ENCODE measurements at regions of chr1 and their contacts with region 1.

Region 1: DNA sequence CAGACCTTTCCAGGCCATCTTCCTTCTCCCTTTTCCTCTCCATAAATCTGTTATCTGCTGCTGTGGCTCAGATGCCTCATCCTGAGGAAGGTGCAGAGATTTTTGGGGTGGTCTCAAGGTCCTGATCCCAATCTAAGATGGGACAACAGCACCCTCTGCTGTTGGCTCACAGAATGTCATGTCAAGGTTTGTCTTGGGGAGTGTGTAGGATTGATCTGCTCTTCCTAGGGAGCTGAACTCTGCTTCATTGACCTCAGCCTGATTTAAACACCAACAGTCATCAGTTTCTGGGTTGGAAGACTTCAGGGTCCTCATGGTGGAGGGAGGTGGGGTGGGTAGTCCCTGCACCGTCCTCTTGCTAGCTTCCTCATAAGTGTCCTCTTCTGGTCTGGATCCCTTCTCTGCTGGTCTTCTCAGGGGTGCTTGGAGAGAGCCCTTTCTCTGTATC is 62.8 kb upstream of the LAX1 start:
- DNase-seq: peak; percentile 81 to 86 (median 84)
- ATAC-seq: peak; percentile 95
- H3K4me3 ChIP-seq: no peak overlapping the region
- H3K27ac ChIP-seq: no peak overlapping the region
- H3K4me1 ChIP-seq: peaks cover 0 to 5% of the 10 kb centered on the region in 2 experiments; a peak in 2 of 5 replicates
- H3K27me3 ChIP-seq: no peaks in the 10 kb centered on the region
- CTCF ChIP-seq: peak; percentile 90 to 97 (median 91)
- EP300 ChIP-seq: no peak; the same call in 1 of the 2 replicates
- POLR2A ChIP-seq: no peak
- RAD21 ChIP-seq: peak; percentile 99 to 100

Region 2: GRCh38 chr1:203273206-203273868 is 428.8 kb before region 1 on chr1:
- CTCF ChIA-PET with region 1: interaction called, 4 read pairs
- POLR2A ChIA-PET with region 1: no interaction called
- in situ Hi-C with region 1: loop called (anchors 5 kb)
- intact Hi-C with region 1: no loop called
- DNase-seq: peak; percentile 81 to 93 (median 87)
- ATAC-seq: peak; percentile 90
- H3K4me3 ChIP-seq: no peak overlapping the region
- H3K27ac ChIP-seq: no peak overlapping the region
- H3K4me1 ChIP-seq: peaks cover 17 to 18% of the 10 kb centered on the region in 2 experiments; a peak in 4 of 5 replicates
- H3K27me3 ChIP-seq: peaks cover 0 to 18% of the 10 kb centered on the region in 2 experiments; a peak in 1 of 5 replicates
- CTCF ChIP-seq: peak; percentile 96 to 100 (median 98)
- EP300 ChIP-seq: peak; percentile 14; the same call in 1 of the 2 replicates
- POLR2A ChIP-seq: no peak
- RAD21 ChIP-seq: peak; percentile 100

Region 3: DNA sequence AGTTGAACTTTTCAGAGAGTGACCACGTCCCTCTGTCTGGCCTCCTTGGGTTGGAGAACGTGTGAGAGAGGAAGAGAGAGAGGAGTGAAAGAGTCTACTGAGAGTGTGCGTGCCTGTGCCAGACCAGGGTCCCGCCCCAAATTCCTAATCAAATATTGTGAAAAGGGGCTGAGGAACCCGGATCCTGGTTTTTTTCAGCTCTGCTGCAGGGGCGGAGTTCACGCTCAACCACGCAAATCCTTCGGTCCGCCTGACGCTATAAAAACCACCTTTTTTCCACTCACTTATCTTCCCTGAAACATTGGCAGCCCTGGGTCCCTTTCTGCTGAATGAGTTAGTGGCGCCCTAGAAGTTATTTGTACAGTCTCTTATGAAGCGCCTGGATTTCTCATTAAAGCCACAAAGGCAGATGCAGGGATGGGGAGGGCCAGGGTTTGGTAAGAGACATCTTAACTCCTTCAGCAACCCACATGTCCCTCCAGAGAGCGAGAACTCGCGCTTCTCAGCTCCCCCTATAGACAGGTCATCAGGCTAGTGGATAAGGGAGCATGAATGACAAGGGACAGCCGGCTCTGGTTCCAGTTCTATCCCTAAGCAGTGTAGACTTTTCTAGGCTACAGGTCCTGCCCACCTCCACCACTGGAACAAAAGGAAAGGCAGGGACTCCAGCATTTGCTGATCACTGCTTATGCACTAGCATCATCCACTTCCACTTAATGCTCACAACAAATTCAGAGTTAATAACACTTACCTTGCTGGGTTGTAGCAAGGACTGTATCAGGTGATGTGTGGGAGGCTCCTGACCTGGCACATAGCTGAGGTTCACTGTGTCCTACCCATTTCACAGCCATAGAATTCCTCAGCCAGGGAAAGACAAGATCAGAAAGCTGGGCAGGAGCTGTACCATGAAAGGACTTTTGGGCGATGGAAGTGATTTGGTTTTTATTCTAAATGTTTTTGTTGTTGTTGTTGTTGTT is 350.8 kb before region 1 on chr1 and contains the start of gene FMOD:
- CTCF ChIA-PET with region 1: no interaction called
- POLR2A ChIA-PET with region 1: no interaction called
- in situ Hi-C with region 1: loop called (anchors 5 kb)
- intact Hi-C with region 1: no loop called
- DNase-seq: peak; percentile 38 to 50 (median 43)
- ATAC-seq: peak; percentile 86
- H3K4me3 ChIP-seq: no peak within 1 kb of the TSS
- H3K27ac ChIP-seq: no peak within 1 kb of the TSS
- H3K4me1 ChIP-seq: no peaks in the 10 kb centered on the region
- H3K27me3 ChIP-seq: peaks cover 47 to 69% of the 10 kb centered on the region in 2 experiments
- CTCF ChIP-seq: peak; percentile 5 to 45 (median 32); a peak in 4 of 6 replicates
- EP300 ChIP-seq: no peak
- POLR2A ChIP-seq: no peak
- RAD21 ChIP-seq: no peak
- polyA plus RNA-seq, gene FMOD: 0.03 TPM in 1 of 2 experiments, not detected in the other

Region 4: GRCh38 chr1:203593723-203594122 is 108.4 kb before region 1 on chr1:
- CTCF ChIA-PET with region 1: interaction called, 10 read pairs
- POLR2A ChIA-PET with region 1: interaction called, 5 read pairs
- in situ Hi-C with region 1: no loop called
- intact Hi-C with region 1: no loop called
- DNase-seq: peak; percentile 42 to 52 (median 44)
- ATAC-seq: peak; percentile 84
- H3K4me3 ChIP-seq: no peak overlapping the region
- H3K27ac ChIP-seq: no peak overlapping the region
- H3K4me1 ChIP-seq: no peaks in the 10 kb centered on the region
- H3K27me3 ChIP-seq: peaks cover 26 to 57% of the 10 kb centered on the region in 2 experiments
- CTCF ChIP-seq: peak; percentile 57 to 59 (median 58)
- EP300 ChIP-seq: no peak
- POLR2A ChIP-seq: no peak
- RAD21 ChIP-seq: peak; percentile 48 to 59

Region 5: DNA sequence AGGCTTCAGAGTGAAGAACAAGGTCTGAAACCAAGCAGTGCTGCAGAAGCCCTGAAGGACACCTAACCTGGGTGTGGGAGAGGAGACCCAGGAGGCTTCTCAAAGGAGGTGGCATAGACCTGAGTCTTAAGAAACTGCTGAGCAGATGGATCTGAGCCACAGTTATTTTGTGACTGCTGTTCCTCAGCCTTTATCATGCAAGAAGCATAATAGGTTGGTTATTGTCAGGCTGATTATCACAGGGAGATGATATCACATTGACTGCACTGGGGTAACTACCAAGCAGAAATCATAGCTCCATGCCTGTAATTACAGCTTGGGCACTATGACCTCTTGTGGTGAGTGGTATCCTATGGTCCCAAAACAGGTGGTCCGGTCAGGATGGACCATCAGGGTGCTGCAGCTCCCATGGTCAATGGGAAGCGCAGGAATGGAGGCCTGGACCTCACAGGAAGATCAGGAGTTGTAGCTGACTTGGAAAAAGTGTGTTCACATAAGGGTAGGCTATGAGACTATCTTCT is 87.0 kb before region 1 on chr1:
- CTCF ChIA-PET with region 1: interaction called, 45 read pairs
- POLR2A ChIA-PET with region 1: interaction called, 3 read pairs
- in situ Hi-C with region 1: loop called (anchors 5 kb)
- intact Hi-C with region 1: no loop called
- DNase-seq: no peak
- ATAC-seq: no peak
- H3K4me3 ChIP-seq: no peak overlapping the region
- H3K27ac ChIP-seq: no peak overlapping the region
- H3K4me1 ChIP-seq: peaks cover 3 to 8% of the 10 kb centered on the region in 2 experiments; a peak in 4 of 5 replicates
- H3K27me3 ChIP-seq: no peaks in the 10 kb centered on the region
- CTCF ChIP-seq: no peak
- EP300 ChIP-seq: no peak
- POLR2A ChIP-seq: no peak
- RAD21 ChIP-seq: no peak

Region 6: GRCh38 chr1:203652724-203653461 is 49.3 kb before region 1 on chr1:
- CTCF ChIA-PET with region 1: no interaction called
- POLR2A ChIA-PET with region 1: no interaction called
- in situ Hi-C with region 1: no loop called
- intact Hi-C with region 1: no loop called
- DNase-seq: no peak
- ATAC-seq: no peak
- H3K4me3 ChIP-seq: no peak overlapping the region
- H3K27ac ChIP-seq: no peak overlapping the region
- H3K4me1 ChIP-seq: peaks cover 31 to 37% of the 10 kb centered on the region in 2 experiments
- H3K27me3 ChIP-seq: no peaks in the 10 kb centered on the region
- CTCF ChIP-seq: no peak
- EP300 ChIP-seq: no peak
- POLR2A ChIP-seq: no peak
- RAD21 ChIP-seq: no peak

Region 7: GRCh38 chr1:203673550-203674427 is 28.4 kb before region 1 on chr1:
- CTCF ChIA-PET with region 1: no interaction called
- POLR2A ChIA-PET with region 1: no interaction called
- in situ Hi-C with region 1: no loop called
- intact Hi-C with region 1: loop called (anchors 1 kb)
- DNase-seq: peak; percentile 79 to 92 (median 86)
- ATAC-seq: peak; percentile 93
- H3K4me3 ChIP-seq: no peak overlapping the region
- H3K27ac ChIP-seq: peak overlapping the region; percentile 77
- H3K4me1 ChIP-seq: peaks cover 22 to 34% of the 10 kb centered on the region in 2 experiments
- H3K27me3 ChIP-seq: no peaks in the 10 kb centered on the region
- CTCF ChIP-seq: peak; percentile 49 to 74 (median 58)
- EP300 ChIP-seq: peak; percentile 71
- POLR2A ChIP-seq: no peak; the same call in none of the 2 replicates
- RAD21 ChIP-seq: peak; percentile 55 to 70